ENCODE measurements at regions of chr1 and their contacts with region 1.

Region 1: GRCh38 chr1:27365372-27366112 is 1.2 kb downstream of the MAP3K6 start:
- DNase-seq: peak; percentile 90
- H3K27ac ChIP-seq: peak overlapping the region; percentile 100
- CTCF ChIP-seq: no peak

Region 2: GRCh38 chr1:27388337-27389005 is 22.9 kb after region 1 on chr1:
- CTCF ChIA-PET with region 1: interaction called, 19 read pairs
- POLR2A ChIA-PET with region 1: interaction called, 3 read pairs
- DNase-seq: peak; percentile 74
- H3K27ac ChIP-seq: no peak overlapping the region
- CTCF ChIP-seq: peak; percentile 91